Esophagus squamous epithelium (tissue), 5 donors: ENCODE measurements at regions of chr2 and their contacts with region 1.

Region 1: GRCh38 chr2:157363612-157364101 is 38.0 kb upstream of the ERMN start:
- DNase-seq: no peak
- H3K4me3 ChIP-seq: no peak overlapping the region
- H3K27ac ChIP-seq: no peak overlapping the region
- H3K4me1 ChIP-seq: no peaks in the 10 kb centered on the region
- H3K27me3 ChIP-seq: no peaks in the 10 kb centered on the region
- CTCF ChIP-seq: no peak
- POLR2A ChIP-seq: no peak

Region 2: DNA sequence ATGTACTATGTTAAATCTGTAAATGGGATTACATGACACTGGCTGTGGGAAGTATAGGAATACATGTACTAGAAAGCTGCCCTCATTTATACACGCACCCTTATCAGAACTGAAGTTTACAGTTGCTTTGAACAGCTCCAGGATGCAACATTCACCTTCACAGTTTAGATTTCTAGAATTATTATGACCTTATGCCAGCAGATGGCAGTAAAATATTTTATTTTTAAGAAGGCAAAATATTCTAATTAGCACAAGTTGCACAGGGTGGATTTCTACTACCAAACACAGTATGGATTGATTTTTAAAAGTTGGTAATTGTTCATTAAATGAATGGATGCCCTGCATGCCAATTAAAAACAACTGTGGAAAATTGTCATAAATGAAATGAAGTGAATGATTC is 1994.7 kb before region 1 on chr2:
- intact Hi-C with region 1: loop called (anchors 10 kb)
- DNase-seq: no peak
- H3K4me3 ChIP-seq: no peak overlapping the region
- H3K27ac ChIP-seq: no peak overlapping the region
- H3K4me1 ChIP-seq: no peaks in the 10 kb centered on the region
- H3K27me3 ChIP-seq: no peaks in the 10 kb centered on the region
- CTCF ChIP-seq: peak in 2 of 6 experiments; percentile 5 to 40
- POLR2A ChIP-seq: no peak